Transverse colon (tissue), 4 donors: ENCODE measurements at regions of chr1 and their contacts with region 1.

Region 1: GRCh38 chr1:234499119-234499942 is 20.4 kb upstream of the TARBP1 start:
- DNase-seq: peak; percentile 93
- H3K4me3 ChIP-seq: peak overlapping the region in 1 of 4 donors; percentile 21
- H3K27ac ChIP-seq: peak overlapping the region; percentile 84 to 87 (median 86)
- H3K4me1 ChIP-seq: peaks cover 8 to 25% (median 18%) of the 10 kb centered on the region in 4 donors
- H3K27me3 ChIP-seq: no peaks in the 10 kb centered on the region
- CTCF ChIP-seq: peak; percentile 90 to 97 (median 92)
- EP300 ChIP-seq: no peak
- POLR2A ChIP-seq: peak; percentile 19

Region 2: DNA sequence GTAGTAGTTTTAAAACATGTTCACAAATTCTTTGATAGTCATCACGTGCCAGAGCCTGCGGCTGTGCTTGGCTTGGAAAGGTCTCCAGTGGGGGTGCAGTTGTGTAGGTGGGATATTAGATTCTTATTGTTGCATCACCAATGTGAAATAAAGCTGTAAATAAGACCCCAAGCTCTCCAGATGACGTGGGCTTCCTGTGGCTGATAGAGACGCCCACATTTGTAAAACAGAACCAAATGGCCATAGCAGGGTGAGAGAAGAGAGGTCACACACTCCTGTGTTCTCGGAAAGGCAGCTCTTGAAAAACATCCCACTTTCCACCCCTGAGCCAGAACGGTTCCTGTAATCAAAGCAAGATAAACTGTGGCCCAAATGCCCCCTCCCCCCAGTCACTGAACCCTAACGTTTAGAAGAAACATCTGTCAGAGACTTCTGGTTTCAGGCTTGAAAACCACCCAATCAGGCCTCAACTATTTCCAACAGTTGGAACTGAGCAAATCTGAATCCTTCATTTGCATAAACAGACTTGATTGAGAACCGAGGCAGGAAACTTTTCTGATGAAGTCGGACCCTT is 1555.6 kb before region 1 on chr1:
- in situ Hi-C with region 1: no loop called
- intact Hi-C with region 1: loop called (anchors 10 kb)
- DNase-seq: no peak
- H3K4me3 ChIP-seq: no peak overlapping the region
- H3K27ac ChIP-seq: no peak overlapping the region
- H3K4me1 ChIP-seq: no peaks in the 10 kb centered on the region
- H3K27me3 ChIP-seq: no peaks in the 10 kb centered on the region
- CTCF ChIP-seq: no peak
- EP300 ChIP-seq: no peak
- POLR2A ChIP-seq: no peak

Region 3: DNA sequence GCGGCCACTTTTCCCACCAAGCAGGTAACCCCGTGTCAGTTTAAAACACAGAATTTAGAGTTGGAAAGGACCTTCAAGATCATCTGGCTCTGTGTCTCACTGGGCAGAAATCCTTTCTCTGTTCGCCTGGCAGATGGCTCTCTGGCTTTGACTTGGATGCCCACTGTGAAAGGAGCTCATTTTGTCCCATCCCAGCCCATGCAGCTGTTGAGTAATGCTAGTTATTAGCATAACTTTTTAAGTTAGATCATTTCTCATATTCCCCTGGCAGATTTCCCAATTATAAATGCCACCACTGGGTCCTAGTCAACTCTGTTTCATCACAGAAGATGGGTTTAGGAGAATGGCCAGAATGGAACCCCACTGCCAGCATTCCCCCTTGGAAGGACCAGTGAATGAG is 538.9 kb before region 1 on chr1:
- in situ Hi-C with region 1: no loop called
- intact Hi-C with region 1: no loop called
- DNase-seq: no peak
- H3K4me3 ChIP-seq: no peak overlapping the region
- H3K27ac ChIP-seq: no peak overlapping the region
- H3K4me1 ChIP-seq: no peaks in the 10 kb centered on the region
- H3K27me3 ChIP-seq: no peaks in the 10 kb centered on the region
- CTCF ChIP-seq: no peak
- EP300 ChIP-seq: no peak
- POLR2A ChIP-seq: no peak

Region 4: GRCh38 chr1:234288946-234289345 is 210.4 kb before region 1 on chr1:
- in situ Hi-C with region 1: no loop called
- intact Hi-C with region 1: no loop called
- DNase-seq: no peak
- H3K4me3 ChIP-seq: no peak overlapping the region
- H3K27ac ChIP-seq: no peak overlapping the region
- H3K4me1 ChIP-seq: no peaks in the 10 kb centered on the region
- H3K27me3 ChIP-seq: no peaks in the 10 kb centered on the region
- CTCF ChIP-seq: no peak
- EP300 ChIP-seq: no peak
- POLR2A ChIP-seq: no peak

Region 5: GRCh38 chr1:234309598-234310459 is 189.5 kb before region 1 on chr1:
- in situ Hi-C with region 1: no loop called
- intact Hi-C with region 1: no loop called
- DNase-seq: peak; percentile 69
- H3K4me3 ChIP-seq: peak overlapping the region in 1 of 4 donors; percentile 9
- H3K27ac ChIP-seq: no peak overlapping the region
- H3K4me1 ChIP-seq: peaks cover 0 to 6% (median 0%) of the 10 kb centered on the region in 4 donors
- H3K27me3 ChIP-seq: no peaks in the 10 kb centered on the region
- CTCF ChIP-seq: peak; percentile 73 to 89 (median 80)
- EP300 ChIP-seq: no peak
- POLR2A ChIP-seq: no peak

Region 6: GRCh38 chr1:234599617-234600417 is 100.5 kb after region 1 on chr1:
- in situ Hi-C with region 1: loop called (anchors 5 to 10 kb)
- intact Hi-C with region 1: no loop called
- DNase-seq: peak; percentile 92
- H3K4me3 ChIP-seq: peak overlapping the region; percentile 13 to 56 (median 43)
- H3K27ac ChIP-seq: peak overlapping the region; percentile 98 to 100 (median 99)
- H3K4me1 ChIP-seq: peaks cover 26 to 66% (median 57%) of the 10 kb centered on the region in 4 donors
- H3K27me3 ChIP-seq: no peaks in the 10 kb centered on the region
- CTCF ChIP-seq: peak in 1 of 5 experiments; percentile 24
- EP300 ChIP-seq: peak; percentile 31
- POLR2A ChIP-seq: peak; percentile 81

Region 7: GRCh38 chr1:234722904-234723720 is 223.8 kb after region 1 on chr1:
- in situ Hi-C with region 1: no loop called
- intact Hi-C with region 1: loop called (anchors 10 kb)
- DNase-seq: peak; percentile 73
- H3K4me3 ChIP-seq: peak overlapping the region in 1 of 4 donors; percentile 14
- H3K27ac ChIP-seq: peak overlapping the region; percentile 97 to 99 (median 98)
- H3K4me1 ChIP-seq: peaks cover 73 to 93% (median 77%) of the 10 kb centered on the region in 4 donors
- H3K27me3 ChIP-seq: no peaks in the 10 kb centered on the region
- CTCF ChIP-seq: no peak
- EP300 ChIP-seq: no peak
- POLR2A ChIP-seq: no peak

Region 8: GRCh38 chr1:234823191-234824176 is 324.2 kb after region 1 on chr1:
- in situ Hi-C with region 1: loop called in 1 of 4 experiments (anchors 10 kb)
- intact Hi-C with region 1: no loop called
- DNase-seq: peak; percentile 87
- H3K4me3 ChIP-seq: no peak overlapping the region
- H3K27ac ChIP-seq: peak overlapping the region; percentile 73 to 87 (median 81)
- H3K4me1 ChIP-seq: peaks cover 11 to 53% (median 30%) of the 10 kb centered on the region in 4 donors
- H3K27me3 ChIP-seq: no peaks in the 10 kb centered on the region
- CTCF ChIP-seq: no peak
- EP300 ChIP-seq: peak; percentile 82
- POLR2A ChIP-seq: no peak

Region 9: GRCh38 chr1:235093696-235094592 is 594.6 kb after region 1 on chr1:
- in situ Hi-C with region 1: loop called in 3 of 4 experiments (anchors 5 to 10 kb)
- intact Hi-C with region 1: no loop called
- DNase-seq: peak; percentile 87
- H3K4me3 ChIP-seq: no peak overlapping the region
- H3K27ac ChIP-seq: peak overlapping the region in 1 of 4 donors; percentile 21
- H3K4me1 ChIP-seq: peaks cover 9 to 13% (median 11%) of the 10 kb centered on the region in 4 donors
- H3K27me3 ChIP-seq: no peaks in the 10 kb centered on the region
- CTCF ChIP-seq: peak; percentile 88 to 95 (median 93)
- EP300 ChIP-seq: no peak
- POLR2A ChIP-seq: no peak